ENCODE measurements at regions of chr9 and their contacts with region 1.

Region 1: DNA sequence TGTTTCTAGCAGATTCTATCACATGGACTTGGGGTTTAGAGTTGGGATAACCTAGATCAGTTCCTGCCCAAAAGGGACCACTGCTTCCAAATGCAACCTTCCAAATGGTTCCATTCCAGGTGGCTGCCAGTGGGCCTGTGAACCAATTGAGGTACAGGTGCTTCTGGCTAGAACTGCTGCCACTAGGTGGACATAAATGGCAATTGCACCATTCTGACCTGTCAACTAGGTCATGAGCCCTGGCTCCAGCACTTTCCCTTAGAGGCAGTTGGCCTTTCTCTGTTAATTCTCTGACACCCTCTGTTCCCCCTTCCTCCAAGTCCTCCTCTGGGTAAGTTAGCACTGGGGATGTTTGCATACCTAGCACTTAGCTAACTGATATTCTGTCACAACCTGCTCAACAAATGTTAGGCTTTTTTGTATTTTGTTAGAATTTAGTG is 16.6 kb upstream of the HEMGN start:
- DNase-seq: peak; percentile 14 to 82 (median 59)
- ATAC-seq: peak; percentile 96
- H3K4me3 ChIP-seq: no peak overlapping the region
- H3K4me3 Mint-ChIP-seq: no peak overlapping the region
- H3K27ac ChIP-seq: no peak overlapping the region
- H3K27ac Mint-ChIP-seq: no peak overlapping the region
- H3K4me1 ChIP-seq: no peaks in the 10 kb centered on the region
- H3K4me1 Mint-ChIP-seq: peaks cover 6% of the 10 kb centered on the region
- H3K27me3 ChIP-seq: no peaks in the 10 kb centered on the region
- H3K27me3 Mint-ChIP-seq: no peaks in the 10 kb centered on the region
- CTCF ChIP-seq: peak; percentile 73

Region 2: GRCh38 chr9:96376891-96377874 is 1577.4 kb before region 1 on chr9:
- CTCF ChIA-PET with region 1: no interaction called
- POLR2A ChIA-PET with region 1: no interaction called
- intact Hi-C with region 1: no loop called
- DNase-seq: no peak
- ATAC-seq: no peak
- H3K4me3 ChIP-seq: no peak overlapping the region
- H3K4me3 Mint-ChIP-seq: no peak overlapping the region
- H3K27ac ChIP-seq: no peak overlapping the region
- H3K27ac Mint-ChIP-seq: no peak overlapping the region
- H3K4me1 ChIP-seq: peaks cover 10% of the 10 kb centered on the region
- H3K4me1 Mint-ChIP-seq: peaks cover 29% of the 10 kb centered on the region
- H3K27me3 ChIP-seq: no peaks in the 10 kb centered on the region
- H3K27me3 Mint-ChIP-seq: no peaks in the 10 kb centered on the region
- CTCF ChIP-seq: no peak

Region 3: DNA sequence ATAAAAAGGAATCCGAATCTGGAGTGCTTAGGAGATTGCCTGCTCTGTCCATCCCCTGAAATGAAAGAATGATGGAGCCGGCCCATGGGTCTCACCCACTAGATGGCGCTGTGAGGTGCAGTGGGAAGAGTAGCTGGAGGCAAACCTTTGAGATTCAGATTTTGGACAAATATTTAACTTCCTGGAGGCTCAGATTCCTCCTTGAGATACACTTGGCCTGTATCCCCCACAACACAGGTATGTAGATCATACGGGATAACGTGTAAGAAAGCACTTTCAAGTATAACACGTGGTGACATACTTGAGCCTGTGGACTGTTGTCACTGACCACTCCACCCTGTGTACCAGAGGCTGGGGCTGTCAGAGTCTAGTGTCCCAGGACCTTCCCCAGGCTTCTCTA is 64.5 kb before region 1 on chr9:
- CTCF ChIA-PET with region 1: interaction called, 4 read pairs
- POLR2A ChIA-PET with region 1: no interaction called
- intact Hi-C with region 1: loop called in 1 of 2 experiments (anchors 1 kb)
- DNase-seq: peak; percentile 44 to 77 (median 64)
- ATAC-seq: peak; percentile 77
- H3K4me3 ChIP-seq: no peak overlapping the region
- H3K4me3 Mint-ChIP-seq: no peak overlapping the region
- H3K27ac ChIP-seq: no peak overlapping the region
- H3K27ac Mint-ChIP-seq: peak overlapping the region; percentile 27
- H3K4me1 ChIP-seq: no peaks in the 10 kb centered on the region
- H3K4me1 Mint-ChIP-seq: peaks cover 8% of the 10 kb centered on the region
- H3K27me3 ChIP-seq: no peaks in the 10 kb centered on the region
- H3K27me3 Mint-ChIP-seq: no peaks in the 10 kb centered on the region
- CTCF ChIP-seq: peak; percentile 84

Region 4: DNA sequence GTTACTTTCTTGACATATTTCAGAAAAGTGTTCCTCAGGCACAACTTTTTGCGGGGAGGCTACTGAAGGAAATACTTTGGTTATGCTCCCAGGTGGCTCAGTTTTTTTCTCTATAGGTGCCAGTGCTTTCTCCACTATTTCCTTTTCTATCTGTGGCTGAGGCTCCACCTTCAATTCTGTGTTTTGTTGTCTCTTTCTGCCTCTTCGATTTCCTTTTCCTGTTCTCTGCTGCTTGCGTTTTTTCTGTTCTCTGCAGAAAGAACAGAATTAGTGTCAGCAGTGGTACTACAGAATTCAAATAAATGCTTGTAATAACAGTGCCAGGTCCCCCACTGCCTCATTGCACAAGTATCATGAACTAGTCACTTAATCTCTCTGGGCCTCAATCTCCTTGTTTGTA is 23.6 kb before region 1 on chr9:
- CTCF ChIA-PET with region 1: interaction called, 23 read pairs
- POLR2A ChIA-PET with region 1: no interaction called
- intact Hi-C with region 1: no loop called
- DNase-seq: peak in 1 of 9 experiments; percentile 49
- ATAC-seq: peak; percentile 59
- H3K4me3 ChIP-seq: peak overlapping the region in 1 of 2 experiments; percentile 3
- H3K4me3 Mint-ChIP-seq: peak overlapping the region; percentile 69
- H3K27ac ChIP-seq: peak overlapping the region in 1 of 2 experiments; percentile 55
- H3K27ac Mint-ChIP-seq: peak overlapping the region; percentile 93
- H3K4me1 ChIP-seq: peaks cover 57% of the 10 kb centered on the region
- H3K4me1 Mint-ChIP-seq: peaks cover 62% of the 10 kb centered on the region
- H3K27me3 ChIP-seq: no peaks in the 10 kb centered on the region
- H3K27me3 Mint-ChIP-seq: no peaks in the 10 kb centered on the region
- CTCF ChIP-seq: no peak

Region 5: GRCh38 chr9:97938081-97938644 is 16.4 kb before region 1 on chr9 and contains the start of gene HEMGN:
- CTCF ChIA-PET with region 1: interaction called, 36 read pairs
- POLR2A ChIA-PET with region 1: no interaction called
- intact Hi-C with region 1: no loop called
- DNase-seq: peak in 7 of 9 experiments; percentile 29 to 86 (median 55)
- ATAC-seq: peak; percentile 98
- H3K4me3 ChIP-seq: no peak within 1 kb of the TSS
- H3K4me3 Mint-ChIP-seq: peak within 1 kb of the TSS; percentile 56
- H3K27ac ChIP-seq: peak within 1 kb of the TSS; percentile 6 to 65
- H3K27ac Mint-ChIP-seq: peak within 1 kb of the TSS; percentile 92
- H3K4me1 ChIP-seq: peaks cover 39% of the 10 kb centered on the region
- H3K4me1 Mint-ChIP-seq: peaks cover 41% of the 10 kb centered on the region
- H3K27me3 ChIP-seq: no peaks in the 10 kb centered on the region
- H3K27me3 Mint-ChIP-seq: no peaks in the 10 kb centered on the region
- CTCF ChIP-seq: no peak
- total RNA-seq, gene HEMGN: 0.14 to 0.33 TPM

Region 6: GRCh38 chr9:97943308-97943855 is 11.2 kb before region 1 on chr9:
- CTCF ChIA-PET with region 1: interaction called, 36 read pairs
- POLR2A ChIA-PET with region 1: interaction called, 3 read pairs
- intact Hi-C with region 1: no loop called
- DNase-seq: no peak
- ATAC-seq: no peak
- H3K4me3 ChIP-seq: no peak overlapping the region
- H3K4me3 Mint-ChIP-seq: no peak overlapping the region
- H3K27ac ChIP-seq: no peak overlapping the region
- H3K27ac Mint-ChIP-seq: no peak overlapping the region
- H3K4me1 ChIP-seq: peaks cover 7% of the 10 kb centered on the region
- H3K4me1 Mint-ChIP-seq: peaks cover 8% of the 10 kb centered on the region
- H3K27me3 ChIP-seq: no peaks in the 10 kb centered on the region
- H3K27me3 Mint-ChIP-seq: no peaks in the 10 kb centered on the region
- CTCF ChIP-seq: no peak

Region 7: GRCh38 chr9:98034593-98035546 is 80.3 kb after region 1 on chr9:
- CTCF ChIA-PET with region 1: interaction called, 15 read pairs
- POLR2A ChIA-PET with region 1: no interaction called
- intact Hi-C with region 1: loop called in 1 of 2 experiments (anchors 1 kb)
- DNase-seq: peak; percentile 77 to 97 (median 91)
- ATAC-seq: peak; percentile 99
- H3K4me3 ChIP-seq: no peak overlapping the region
- H3K4me3 Mint-ChIP-seq: no peak overlapping the region
- H3K27ac ChIP-seq: no peak overlapping the region
- H3K27ac Mint-ChIP-seq: no peak overlapping the region
- H3K4me1 ChIP-seq: no peaks in the 10 kb centered on the region
- H3K4me1 Mint-ChIP-seq: peaks cover 6% of the 10 kb centered on the region
- H3K27me3 ChIP-seq: no peaks in the 10 kb centered on the region
- H3K27me3 Mint-ChIP-seq: no peaks in the 10 kb centered on the region
- CTCF ChIP-seq: peak; percentile 80

Region 8: GRCh38 chr9:98263482-98264357 is 309.1 kb after region 1 on chr9:
- CTCF ChIA-PET with region 1: no interaction called
- POLR2A ChIA-PET with region 1: no interaction called
- intact Hi-C with region 1: loop called in 1 of 2 experiments (anchors 1 kb)
- DNase-seq: peak; percentile 70 to 87 (median 84)
- ATAC-seq: peak; percentile 100
- H3K4me3 ChIP-seq: no peak overlapping the region
- H3K4me3 Mint-ChIP-seq: no peak overlapping the region
- H3K27ac ChIP-seq: no peak overlapping the region
- H3K27ac Mint-ChIP-seq: no peak overlapping the region
- H3K4me1 ChIP-seq: no peaks in the 10 kb centered on the region
- H3K4me1 Mint-ChIP-seq: peaks cover 2% of the 10 kb centered on the region
- H3K27me3 ChIP-seq: no peaks in the 10 kb centered on the region
- H3K27me3 Mint-ChIP-seq: no peaks in the 10 kb centered on the region
- CTCF ChIP-seq: peak; percentile 92

Measured in CD8-positive, alpha-beta T cell (primary cell).